ENCODE measurements at regions of chr14 and their contacts with region 1.

Region 1: GRCh38 chr14:35416108-35416750 is 11.7 kb upstream of the NFKBIA start:
- DNase-seq: peak; percentile 72
- H3K4me3 Mint-ChIP-seq: peak overlapping the region; percentile 79
- H3K27ac Mint-ChIP-seq: peak overlapping the region; percentile 98
- H3K4me1 Mint-ChIP-seq: peaks cover 64% of the 10 kb centered on the region
- H3K27me3 Mint-ChIP-seq: peaks cover 2% of the 10 kb centered on the region

Region 2: GRCh38 chr14:34539407-34540180 is 876.6 kb before region 1 on chr14 and contains the start of gene EAPP:
- intact Hi-C with region 1: loop called (anchors 10 kb)
- DNase-seq: peak; percentile 93
- H3K4me3 Mint-ChIP-seq: peak within 1 kb of the TSS; percentile 98
- H3K27ac Mint-ChIP-seq: peak within 1 kb of the TSS; percentile 93
- H3K4me1 Mint-ChIP-seq: peaks cover 18% of the 10 kb centered on the region
- H3K27me3 Mint-ChIP-seq: no peaks in the 10 kb centered on the region
- total RNA-seq, gene EAPP: 34.4 and 35.1 TPM in 2 replicates

Region 3: GRCh38 chr14:34875031-34875922 is 541.0 kb before region 1 on chr14 and contains the start of gene BAZ1A:
- intact Hi-C with region 1: loop called (anchors 1 kb)
- DNase-seq: peak; percentile 41
- H3K4me3 Mint-ChIP-seq: peak within 1 kb of the TSS; percentile 100
- H3K27ac Mint-ChIP-seq: peak within 1 kb of the TSS; percentile 100
- H3K4me1 Mint-ChIP-seq: peaks cover 34% of the 10 kb centered on the region
- H3K27me3 Mint-ChIP-seq: peaks cover 2% of the 10 kb centered on the region
- total RNA-seq, gene BAZ1A: 75.0 and 83.7 TPM in 2 replicates

Region 4: DNA sequence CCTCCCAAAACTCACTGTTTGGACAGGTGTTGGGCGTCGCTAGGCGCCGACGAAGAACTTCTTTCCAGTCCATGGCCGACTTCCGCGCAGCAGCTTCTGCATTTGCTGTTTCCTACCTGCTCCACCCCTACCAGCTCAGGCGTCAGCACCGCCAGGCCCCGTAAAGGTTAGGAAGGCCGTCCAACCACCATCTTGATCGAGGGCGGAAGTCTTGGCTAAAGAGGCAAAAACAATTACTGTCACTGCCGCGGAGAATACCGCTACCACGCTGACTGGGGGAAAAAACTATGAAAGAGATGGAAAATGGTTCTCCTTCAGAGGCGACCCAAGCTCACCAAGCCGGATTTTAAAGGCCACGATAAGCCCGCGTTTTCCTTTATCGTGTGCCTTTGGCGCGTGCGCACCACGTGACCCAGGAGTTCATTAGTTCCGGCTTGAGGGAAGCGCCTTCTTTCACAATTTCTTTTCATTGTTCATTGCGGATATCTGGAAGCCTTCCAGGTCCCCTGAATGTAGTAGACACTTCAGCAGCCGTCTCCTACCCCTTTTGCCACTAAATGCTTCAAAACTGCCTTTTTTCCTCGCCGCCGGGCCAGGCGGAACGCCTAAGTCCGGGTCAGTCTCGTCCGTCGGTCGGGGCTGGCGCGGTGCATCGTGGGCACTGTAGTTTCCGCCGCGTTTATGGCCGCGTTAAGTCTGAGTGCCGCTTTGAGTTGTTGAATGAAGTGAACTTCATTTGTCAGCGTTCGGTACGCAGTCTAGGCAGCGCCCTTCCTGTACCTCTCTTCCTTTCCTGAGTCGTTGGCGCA is 294.1 kb before region 1 on chr14 and contains the starts of genes PPP2R3C and PRORP:
- intact Hi-C with region 1: loop called (anchors 1 kb)
- DNase-seq: peak; percentile 88
- H3K4me3 Mint-ChIP-seq: peak within 1 kb of the TSS; percentile 97
- H3K27ac Mint-ChIP-seq: peak within 1 kb of the TSS; percentile 100
- H3K4me1 Mint-ChIP-seq: peaks cover 61% of the 10 kb centered on the region
- H3K27me3 Mint-ChIP-seq: no peaks in the 10 kb centered on the region
- total RNA-seq, gene PPP2R3C: 48.2 and 52.4 TPM in 2 replicates
- total RNA-seq, gene PRORP: 34.1 and 38.0 TPM in 2 replicates

Region 5: GRCh38 chr14:35201066-35201465 is 215.2 kb before region 1 on chr14:
- intact Hi-C with region 1: loop called (anchors 1 kb)
- DNase-seq: no peak
- H3K4me3 Mint-ChIP-seq: peak overlapping the region; percentile 52
- H3K27ac Mint-ChIP-seq: peak overlapping the region; percentile 75
- H3K4me1 Mint-ChIP-seq: peaks cover 51% of the 10 kb centered on the region
- H3K27me3 Mint-ChIP-seq: no peaks in the 10 kb centered on the region

Region 6: DNA sequence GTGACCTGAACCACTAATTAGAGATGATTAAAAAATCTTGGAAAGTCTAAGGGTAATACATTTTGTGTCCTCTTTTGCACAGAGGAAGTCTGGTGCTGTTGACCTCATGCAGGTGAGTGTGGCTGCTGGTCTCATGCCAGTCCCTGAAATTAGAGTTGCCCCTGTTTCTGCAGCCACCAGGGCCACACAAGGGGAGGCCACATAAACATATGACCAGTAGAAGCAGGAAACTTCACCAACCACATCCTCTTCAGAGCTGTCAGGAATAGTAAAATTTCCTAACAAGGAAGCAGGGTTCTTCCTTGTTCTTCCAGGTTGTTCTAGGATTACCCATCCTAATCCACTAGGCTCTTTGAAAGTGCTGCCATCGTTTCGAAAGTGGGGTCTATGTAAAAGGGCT is 95.8 kb before region 1 on chr14:
- intact Hi-C with region 1: loop called (anchors 1 kb)
- DNase-seq: no peak
- H3K4me3 Mint-ChIP-seq: no peak overlapping the region
- H3K27ac Mint-ChIP-seq: no peak overlapping the region
- H3K4me1 Mint-ChIP-seq: no peaks in the 10 kb centered on the region
- H3K27me3 Mint-ChIP-seq: no peaks in the 10 kb centered on the region

Region 7: GRCh38 chr14:35826218-35826951 is 410.2 kb after region 1 on chr14 and contains the start of gene BRMS1L:
- intact Hi-C with region 1: loop called (anchors 5 kb)
- DNase-seq: peak; percentile 96
- H3K4me3 Mint-ChIP-seq: peak within 1 kb of the TSS; percentile 88
- H3K27ac Mint-ChIP-seq: peak within 1 kb of the TSS; percentile 90
- H3K4me1 Mint-ChIP-seq: peaks cover 16% of the 10 kb centered on the region
- H3K27me3 Mint-ChIP-seq: peaks cover 4% of the 10 kb centered on the region
- total RNA-seq, gene BRMS1L: 6.3 and 9.1 TPM in 2 replicates

Measured in activated T-helper 1 cell treated with anti-CD3 and anti-CD28 coated beads, Interleukin-12 subunit alpha, Interleukin-12 subunit beta, Interleukin-2, Interleukin-4 antibody, amounts not matched to agents 30 ng/mL and 10 ng/mL and 1 ng/mL, durations not matched to agents 14 hours and 24 hours and 36 hours (primary cell).